ENCODE measurements at regions of chr3 and their contacts with region 1.

Region 1: GRCh38 chr3:186617038-186617946 is 4.4 kb downstream of the AHSG start:
- DNase-seq: peak; percentile 89
- H3K4me3 Mint-ChIP-seq: peak overlapping the region; percentile 19
- H3K27ac Mint-ChIP-seq: no peak overlapping the region
- H3K4me1 Mint-ChIP-seq: peaks cover 22% of the 10 kb centered on the region
- H3K27me3 Mint-ChIP-seq: peaks cover 59% of the 10 kb centered on the region

Region 2: GRCh38 chr3:185942907-185943759 is 674.2 kb before region 1 on chr3:
- CTCF ChIA-PET with region 1: interaction called, 12 read pairs
- DNase-seq: peak; percentile 92
- H3K4me3 Mint-ChIP-seq: peak overlapping the region; percentile 6
- H3K27ac Mint-ChIP-seq: peak overlapping the region; percentile 38
- H3K4me1 Mint-ChIP-seq: peaks cover 23% of the 10 kb centered on the region
- H3K27me3 Mint-ChIP-seq: peaks cover 18% of the 10 kb centered on the region

Region 3: GRCh38 chr3:186464424-186465093 is 152.7 kb before region 1 on chr3:
- CTCF ChIA-PET with region 1: no interaction called
- DNase-seq: no peak
- H3K4me3 Mint-ChIP-seq: no peak overlapping the region
- H3K27ac Mint-ChIP-seq: no peak overlapping the region
- H3K4me1 Mint-ChIP-seq: no peaks in the 10 kb centered on the region
- H3K27me3 Mint-ChIP-seq: peaks cover 13% of the 10 kb centered on the region

Region 4: GRCh38 chr3:186514296-186515002 is 102.8 kb before region 1 on chr3:
- CTCF ChIA-PET with region 1: no interaction called
- DNase-seq: no peak
- H3K4me3 Mint-ChIP-seq: no peak overlapping the region
- H3K27ac Mint-ChIP-seq: no peak overlapping the region
- H3K4me1 Mint-ChIP-seq: peaks cover 37% of the 10 kb centered on the region
- H3K27me3 Mint-ChIP-seq: peaks cover 12% of the 10 kb centered on the region

Region 5: DNA sequence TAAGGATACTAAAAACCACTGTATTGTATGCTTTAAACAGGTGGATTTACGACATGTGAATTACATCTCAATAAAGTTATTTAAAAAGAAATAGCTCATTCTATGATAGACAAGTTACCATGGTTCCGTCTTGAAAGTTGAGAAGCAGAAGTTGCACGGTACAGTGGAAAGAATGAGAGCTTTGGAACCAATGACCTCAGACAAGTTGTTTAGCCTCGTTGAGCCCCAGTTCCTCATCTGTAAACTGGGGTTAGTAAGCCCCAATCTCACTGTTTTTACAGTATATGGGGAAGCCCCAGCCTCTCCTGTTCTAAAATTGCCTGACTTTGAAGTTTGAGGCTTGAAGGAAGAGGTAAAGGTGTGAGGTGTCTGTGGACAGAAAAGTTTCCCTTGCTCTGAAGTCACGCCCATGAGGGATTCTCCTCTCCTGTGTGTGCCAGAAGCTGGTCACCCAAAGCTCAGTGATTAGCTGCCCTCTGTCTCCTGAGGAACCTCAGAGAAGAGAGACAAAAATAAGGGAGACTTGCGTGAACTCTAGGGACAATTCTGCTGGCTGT is 83.1 kb before region 1 on chr3:
- CTCF ChIA-PET with region 1: interaction called, 51 read pairs
- DNase-seq: peak; percentile 42
- H3K4me3 Mint-ChIP-seq: no peak overlapping the region
- H3K27ac Mint-ChIP-seq: peak overlapping the region; percentile 25
- H3K4me1 Mint-ChIP-seq: peaks cover 24% of the 10 kb centered on the region
- H3K27me3 Mint-ChIP-seq: peaks cover 7% of the 10 kb centered on the region

Region 6: GRCh38 chr3:186598108-186598784 is 19.0 kb before region 1 on chr3:
- CTCF ChIA-PET with region 1: interaction called, 28 read pairs
- DNase-seq: no peak
- H3K4me3 Mint-ChIP-seq: no peak overlapping the region
- H3K27ac Mint-ChIP-seq: no peak overlapping the region
- H3K4me1 Mint-ChIP-seq: peaks cover 4% of the 10 kb centered on the region
- H3K27me3 Mint-ChIP-seq: peaks cover 15% of the 10 kb centered on the region

Region 7: GRCh38 chr3:186783073-186783730 is 165.9 kb after region 1 on chr3 and contains the start of gene EIF4A2:
- CTCF ChIA-PET with region 1: interaction called, 20 read pairs
- DNase-seq: peak; percentile 91
- H3K4me3 Mint-ChIP-seq: peak within 1 kb of the TSS; percentile 93
- H3K27ac Mint-ChIP-seq: peak within 1 kb of the TSS; percentile 97
- H3K4me1 Mint-ChIP-seq: peaks cover 47% of the 10 kb centered on the region
- H3K27me3 Mint-ChIP-seq: peaks cover 16% of the 10 kb centered on the region

Region 8: GRCh38 chr3:187714404-187714979 is 1097.2 kb after region 1 on chr3:
- CTCF ChIA-PET with region 1: no interaction called
- DNase-seq: peak; percentile 83
- H3K4me3 Mint-ChIP-seq: no peak overlapping the region
- H3K27ac Mint-ChIP-seq: peak overlapping the region; percentile 26
- H3K4me1 Mint-ChIP-seq: peaks cover 16% of the 10 kb centered on the region
- H3K27me3 Mint-ChIP-seq: peaks cover 4% of the 10 kb centered on the region

Measured in activated naive CD4-positive, alpha-beta T cell treated with anti-CD3 and anti-CD28 coated beads, Interleukin-2, amount 10 ng/mL, durations not matched to agents 7 days and 5 days (primary cell).